CD14-positive monocyte (primary cell): ENCODE measurements at regions of chr6 and their contacts with region 1.

Region 1: GRCh38 chr6:28838634-28839442 is 84.9 kb downstream of the TRIM27 start:
- DNase-seq: peak; percentile 42 to 68 (median 43)
- H3K4me3 ChIP-seq: peak overlapping the region; percentile 54 to 83 (median 83)
- H3K4me3 Mint-ChIP-seq: peak overlapping the region; percentile 85 to 88
- H3K27ac ChIP-seq: no peak overlapping the region
- H3K27ac Mint-ChIP-seq: no peak overlapping the region
- H3K4me1 ChIP-seq: peaks cover 25 to 29% of the 10 kb centered on the region in 2 donors
- H3K4me1 Mint-ChIP-seq: peaks cover 25% of the 10 kb centered on the region
- H3K27me3 ChIP-seq: peaks cover 25 to 69% of the 10 kb centered on the region in 2 donors
- H3K27me3 Mint-ChIP-seq: peaks cover 63 to 87% (median 69%) of the 10 kb centered on the region in 3 donors
- CTCF ChIP-seq: peak; percentile 63

Region 2: GRCh38 chr6:28907394-28907793 is 68.6 kb after region 1 on chr6:
- intact Hi-C with region 1: no loop called
- DNase-seq: peak; percentile 21 to 63 (median 49)
- H3K4me3 ChIP-seq: peak overlapping the region in 1 of 3 experiments; percentile 20
- H3K4me3 Mint-ChIP-seq: no peak overlapping the region
- H3K27ac ChIP-seq: peak overlapping the region in 1 of 2 donors; percentile 77
- H3K27ac Mint-ChIP-seq: peak overlapping the region; percentile 83 to 92 (median 85)
- H3K4me1 ChIP-seq: peaks cover 23 to 25% of the 10 kb centered on the region in 2 donors
- H3K4me1 Mint-ChIP-seq: peaks cover 34% of the 10 kb centered on the region
- H3K27me3 ChIP-seq: no peaks in the 10 kb centered on the region
- H3K27me3 Mint-ChIP-seq: no peaks in the 10 kb centered on the region
- CTCF ChIP-seq: no peak

Region 3: GRCh38 chr6:29016559-29017427 is 178.0 kb after region 1 on chr6:
- intact Hi-C with region 1: loop called (anchors 2 kb)
- DNase-seq: peak; percentile 60 to 75 (median 71)
- H3K4me3 ChIP-seq: peak overlapping the region; percentile 19 to 81 (median 76)
- H3K4me3 Mint-ChIP-seq: peak overlapping the region; percentile 85 to 96
- H3K27ac ChIP-seq: no peak overlapping the region
- H3K27ac Mint-ChIP-seq: peak overlapping the region in 4 of 7 donors; percentile 45 to 81 (median 73)
- H3K4me1 ChIP-seq: peaks cover 11 to 15% of the 10 kb centered on the region in 2 donors
- H3K4me1 Mint-ChIP-seq: peaks cover 14% of the 10 kb centered on the region
- H3K27me3 ChIP-seq: peaks cover 32 to 57% of the 10 kb centered on the region in 2 donors
- H3K27me3 Mint-ChIP-seq: peaks cover 35 to 61% (median 45%) of the 10 kb centered on the region in 3 donors
- CTCF ChIP-seq: peak; percentile 91